ENCODE measurements at regions of chr1 and their contacts with region 1.

Region 1: GRCh38 chr1:192539297-192540092 is 36.1 kb upstream of the RGS1 start:
- DNase-seq: no peak
- ATAC-seq: peak; percentile 25
- H3K4me3 Mint-ChIP-seq: peak overlapping the region; percentile 69
- H3K27ac Mint-ChIP-seq: peak overlapping the region; percentile 86
- H3K4me1 Mint-ChIP-seq: peaks cover 61% of the 10 kb centered on the region
- H3K27me3 Mint-ChIP-seq: no peaks in the 10 kb centered on the region
- CTCF ChIP-seq: no peak

Region 2: GRCh38 chr1:192491804-192492554 is 47.5 kb before region 1 on chr1:
- CTCF ChIA-PET with region 1: no interaction called
- POLR2A ChIA-PET with region 1: no interaction called
- intact Hi-C with region 1: no loop called
- DNase-seq: no peak
- ATAC-seq: no peak
- H3K4me3 Mint-ChIP-seq: no peak overlapping the region
- H3K27ac Mint-ChIP-seq: no peak overlapping the region
- H3K4me1 Mint-ChIP-seq: peaks cover 6% of the 10 kb centered on the region
- H3K27me3 Mint-ChIP-seq: peaks cover 5% of the 10 kb centered on the region
- CTCF ChIP-seq: no peak

Region 3: GRCh38 chr1:192550922-192551534 is 11.5 kb after region 1 on chr1:
- CTCF ChIA-PET with region 1: interaction called, 3 read pairs
- POLR2A ChIA-PET with region 1: interaction called, 22 read pairs
- intact Hi-C with region 1: loop called (anchors 1 kb)
- DNase-seq: no peak
- ATAC-seq: peak; percentile 38
- H3K4me3 Mint-ChIP-seq: peak overlapping the region; percentile 39
- H3K27ac Mint-ChIP-seq: peak overlapping the region; percentile 69
- H3K4me1 Mint-ChIP-seq: peaks cover 63% of the 10 kb centered on the region
- H3K27me3 Mint-ChIP-seq: no peaks in the 10 kb centered on the region
- CTCF ChIP-seq: no peak

Region 4: GRCh38 chr1:192571668-192572067 is 32.2 kb after region 1 on chr1:
- CTCF ChIA-PET with region 1: no interaction called
- POLR2A ChIA-PET with region 1: interaction called, 11 read pairs
- intact Hi-C with region 1: loop called (anchors 1 kb)
- DNase-seq: no peak
- ATAC-seq: no peak
- H3K4me3 Mint-ChIP-seq: no peak overlapping the region
- H3K27ac Mint-ChIP-seq: no peak overlapping the region
- H3K4me1 Mint-ChIP-seq: peaks cover 31% of the 10 kb centered on the region
- H3K27me3 Mint-ChIP-seq: no peaks in the 10 kb centered on the region
- CTCF ChIP-seq: no peak

Measured in activated B cell treated with CpG ODN at 0.5 μM for 24 hours (primary cell).